CD8-positive, alpha-beta T cell (primary cell): ENCODE measurements at regions of chr14 and their contacts with region 1.

Region 1: DNA sequence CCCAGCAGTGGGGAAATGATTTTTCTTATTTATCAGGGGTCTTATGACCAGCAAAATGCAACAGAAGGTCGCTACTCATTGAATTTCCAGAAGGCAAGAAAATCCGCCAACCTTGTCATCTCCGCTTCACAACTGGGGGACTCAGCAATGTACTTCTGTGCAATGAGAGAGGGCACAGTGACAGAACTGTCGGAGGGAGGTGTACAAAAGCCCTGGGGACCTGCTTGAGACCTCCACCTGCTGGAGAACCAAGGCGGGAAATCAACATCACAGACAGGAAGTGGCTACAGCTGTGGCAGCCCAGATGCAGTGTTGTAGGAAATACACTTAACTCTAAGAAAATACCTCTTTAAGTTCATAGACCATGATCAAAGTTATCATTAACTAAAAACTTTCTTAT is 250.9 kb upstream of the OR4E1 start:
- DNase-seq: peak; percentile 31 to 88 (median 69)
- ATAC-seq: peak; percentile 83
- H3K4me3 ChIP-seq: peak overlapping the region; percentile 16 to 33
- H3K4me3 Mint-ChIP-seq: peak overlapping the region; percentile 74
- H3K27ac ChIP-seq: peak overlapping the region; percentile 22 to 48
- H3K27ac Mint-ChIP-seq: peak overlapping the region; percentile 91
- H3K4me1 ChIP-seq: peaks cover 46% of the 10 kb centered on the region
- H3K4me1 Mint-ChIP-seq: peaks cover 58% of the 10 kb centered on the region
- H3K27me3 ChIP-seq: no peaks in the 10 kb centered on the region
- H3K27me3 Mint-ChIP-seq: no peaks in the 10 kb centered on the region
- CTCF ChIP-seq: peak; percentile 38

Region 2: DNA sequence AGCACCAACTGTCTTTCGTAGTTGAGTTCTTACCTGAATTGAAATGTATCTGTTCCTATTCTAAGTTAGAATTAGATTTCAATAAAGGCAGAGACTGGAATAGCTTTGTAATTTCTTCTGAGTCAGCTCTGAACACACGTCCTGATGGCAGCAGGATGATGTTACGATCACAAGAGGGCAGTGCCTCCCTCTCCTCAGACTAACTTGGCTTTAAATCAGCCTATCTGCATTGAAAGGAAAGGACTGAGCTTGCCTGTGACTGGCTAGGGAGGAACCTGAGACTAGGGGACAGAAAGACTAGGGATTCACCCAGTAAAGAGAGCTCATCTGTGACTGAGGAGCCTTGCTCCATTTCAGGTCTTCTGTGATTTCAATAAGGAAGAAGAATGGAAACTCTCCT is 72.8 kb after region 1 on chr14:
- CTCF ChIA-PET with region 1: interaction called, 6 read pairs
- POLR2A ChIA-PET with region 1: no interaction called
- intact Hi-C with region 1: loop called in 1 of 2 experiments (anchors 5 kb)
- DNase-seq: peak in 5 of 9 experiments; percentile 24 to 77 (median 52)
- ATAC-seq: peak; percentile 91
- H3K4me3 ChIP-seq: peak overlapping the region; percentile 46 to 48
- H3K4me3 Mint-ChIP-seq: peak overlapping the region; percentile 86
- H3K27ac ChIP-seq: peak overlapping the region; percentile 24 to 36
- H3K27ac Mint-ChIP-seq: peak overlapping the region; percentile 95
- H3K4me1 ChIP-seq: peaks cover 7% of the 10 kb centered on the region
- H3K4me1 Mint-ChIP-seq: peaks cover 24% of the 10 kb centered on the region
- H3K27me3 ChIP-seq: no peaks in the 10 kb centered on the region
- H3K27me3 Mint-ChIP-seq: no peaks in the 10 kb centered on the region
- CTCF ChIP-seq: peak; percentile 27